Activated naive CD4-positive, alpha-beta T cell treated with anti-CD3 and anti-CD28 coated beads for 36 hours (primary cell): ENCODE measurements at regions of chr5 and their contacts with region 1.

Region 1: DNA sequence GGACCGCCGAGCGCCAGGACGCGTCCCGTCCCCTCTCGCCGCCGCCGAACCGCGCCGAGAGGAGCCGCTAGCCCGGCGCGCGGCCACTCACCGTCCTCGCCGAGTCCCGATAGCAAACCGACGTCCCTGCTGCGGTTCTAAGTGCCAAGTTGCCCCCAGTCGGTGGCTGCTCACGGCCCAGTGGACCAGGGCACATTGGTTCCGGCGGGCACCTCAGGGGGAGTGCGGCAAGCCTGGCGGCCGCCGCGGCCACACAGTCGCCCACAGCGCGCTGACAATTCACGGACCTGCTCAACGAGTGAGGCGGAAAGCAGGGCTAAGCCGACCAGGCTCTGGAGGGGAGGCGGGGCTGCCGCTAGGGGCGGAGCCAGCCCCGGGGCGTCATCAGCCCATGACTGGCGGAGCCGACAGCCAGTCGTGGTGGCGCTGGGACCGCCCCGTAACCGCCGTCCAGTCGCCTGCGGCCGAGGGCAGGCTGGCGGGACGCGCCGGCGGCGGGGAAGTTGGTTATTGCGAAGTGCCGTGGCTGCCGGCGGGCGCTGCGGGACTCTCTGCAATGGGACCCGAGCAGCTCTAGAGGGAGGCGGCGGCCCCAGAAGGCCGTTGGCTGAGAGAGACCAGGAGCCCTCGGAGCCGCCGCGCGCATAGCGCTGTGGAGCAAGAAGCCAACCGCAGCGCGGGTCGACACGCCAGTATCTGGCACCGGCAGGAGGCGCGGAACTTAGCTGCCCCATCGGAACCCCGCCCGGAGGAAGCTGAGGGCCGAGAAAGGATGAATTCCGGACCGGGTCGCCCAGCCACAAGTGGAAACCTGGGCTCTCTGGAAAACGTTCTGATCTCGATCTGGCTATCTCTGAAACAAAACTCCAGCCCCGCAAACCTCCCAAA is at the start of gene MARCHF3:
- DNase-seq: peak; percentile 94
- H3K4me3 Mint-ChIP-seq: peak within 1 kb of the TSS; percentile 93
- H3K27ac Mint-ChIP-seq: peak within 1 kb of the TSS; percentile 75
- H3K4me1 Mint-ChIP-seq: peaks cover 31% of the 10 kb centered on the region
- H3K27me3 Mint-ChIP-seq: no peaks in the 10 kb centered on the region
- total RNA-seq, gene MARCHF3: 11.8 TPM

Region 2: GRCh38 chr5:126600631-126601511 is 429.6 kb before region 1 on chr5 and contains the start of gene PHAX:
- CTCF ChIA-PET with region 1: no interaction called
- intact Hi-C with region 1: loop called (anchors 1 kb)
- DNase-seq: peak; percentile 78
- H3K4me3 Mint-ChIP-seq: peak within 1 kb of the TSS; percentile 90
- H3K27ac Mint-ChIP-seq: peak within 1 kb of the TSS; percentile 93
- H3K4me1 Mint-ChIP-seq: peaks cover 34% of the 10 kb centered on the region
- H3K27me3 Mint-ChIP-seq: no peaks in the 10 kb centered on the region
- total RNA-seq, gene PHAX: 34.9 to 37.2 TPM

Region 3: DNA sequence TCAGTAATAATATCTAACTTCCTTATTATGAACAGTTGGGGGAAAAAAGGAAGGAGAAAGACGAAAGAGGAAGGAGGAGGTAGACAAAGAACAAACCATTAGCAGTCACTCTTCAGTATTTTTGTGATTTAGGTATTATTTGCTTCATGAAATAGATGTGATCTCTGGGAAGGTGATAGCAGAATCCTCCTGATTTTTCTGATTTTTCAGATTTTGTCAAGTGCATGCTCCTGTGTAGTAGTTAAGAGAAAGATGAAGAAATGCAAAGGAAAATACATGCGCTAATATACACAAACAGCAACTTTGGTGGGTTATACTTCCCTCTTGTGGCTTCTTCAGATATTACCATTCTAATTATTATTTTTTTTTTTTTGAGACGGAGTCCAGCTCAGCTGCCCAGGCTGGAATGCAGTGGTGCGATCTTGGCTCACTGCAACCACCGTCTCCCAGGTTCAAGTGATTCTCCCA is 221.9 kb before region 1 on chr5:
- CTCF ChIA-PET with region 1: interaction called, 4 read pairs
- intact Hi-C with region 1: loop called (anchors 1 kb)
- DNase-seq: no peak
- H3K4me3 Mint-ChIP-seq: no peak overlapping the region
- H3K27ac Mint-ChIP-seq: peak overlapping the region; percentile 98
- H3K4me1 Mint-ChIP-seq: peaks cover 60% of the 10 kb centered on the region
- H3K27me3 Mint-ChIP-seq: no peaks in the 10 kb centered on the region

Region 4: GRCh38 chr5:126972062-126972895 is 58.2 kb before region 1 on chr5:
- CTCF ChIA-PET with region 1: interaction called, 3 read pairs
- intact Hi-C with region 1: loop called (anchors 1 kb)
- DNase-seq: peak; percentile 45
- H3K4me3 Mint-ChIP-seq: peak overlapping the region; percentile 70
- H3K27ac Mint-ChIP-seq: peak overlapping the region; percentile 94
- H3K4me1 Mint-ChIP-seq: peaks cover 37% of the 10 kb centered on the region
- H3K27me3 Mint-ChIP-seq: no peaks in the 10 kb centered on the region

Region 5: GRCh38 chr5:127019928-127020327 is 10.6 kb before region 1 on chr5:
- CTCF ChIA-PET with region 1: no interaction called
- intact Hi-C with region 1: loop called (anchors 1 kb)
- DNase-seq: no peak
- H3K4me3 Mint-ChIP-seq: no peak overlapping the region
- H3K27ac Mint-ChIP-seq: no peak overlapping the region
- H3K4me1 Mint-ChIP-seq: peaks cover 23% of the 10 kb centered on the region
- H3K27me3 Mint-ChIP-seq: no peaks in the 10 kb centered on the region

Region 6: DNA sequence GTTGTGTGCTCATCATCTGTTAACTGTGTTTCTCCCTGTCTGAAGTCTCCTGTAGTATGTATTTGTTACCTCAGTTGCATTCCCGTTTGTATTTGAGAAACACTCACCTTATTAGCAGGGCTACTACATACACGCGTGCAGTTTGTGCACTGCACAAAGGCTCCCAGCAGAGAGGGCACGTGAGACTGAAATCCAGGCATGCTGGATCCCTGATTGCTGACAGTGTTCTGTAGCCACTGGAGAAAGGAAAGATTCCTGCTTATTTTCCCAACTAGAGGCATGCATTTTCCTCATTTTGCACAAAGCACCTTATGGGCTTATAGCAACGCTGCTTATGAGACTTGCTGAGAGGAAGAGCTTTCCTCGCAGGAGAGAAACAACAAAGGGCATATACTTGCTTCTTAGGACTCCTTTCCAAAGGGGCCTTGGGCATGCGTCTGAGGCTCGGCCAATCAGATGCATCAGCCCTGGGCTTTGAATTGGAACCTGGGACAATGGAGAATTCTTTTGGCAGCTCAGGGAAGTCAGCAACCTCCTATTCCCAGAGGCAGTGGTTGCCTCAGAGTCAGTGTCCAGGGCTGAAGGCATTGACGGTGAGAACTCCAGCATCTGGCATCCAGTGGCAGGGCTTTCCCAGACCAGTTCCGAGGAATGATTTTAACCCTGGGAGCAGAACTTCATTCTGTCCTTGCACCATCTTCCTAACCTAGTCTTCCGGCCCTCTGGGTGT is 250.2 kb after region 1 on chr5:
- CTCF ChIA-PET with region 1: no interaction called
- intact Hi-C with region 1: no loop called
- DNase-seq: no peak
- H3K4me3 Mint-ChIP-seq: no peak overlapping the region
- H3K27ac Mint-ChIP-seq: no peak overlapping the region
- H3K4me1 Mint-ChIP-seq: no peaks in the 10 kb centered on the region
- H3K27me3 Mint-ChIP-seq: peaks cover 4% of the 10 kb centered on the region

Region 7: DNA sequence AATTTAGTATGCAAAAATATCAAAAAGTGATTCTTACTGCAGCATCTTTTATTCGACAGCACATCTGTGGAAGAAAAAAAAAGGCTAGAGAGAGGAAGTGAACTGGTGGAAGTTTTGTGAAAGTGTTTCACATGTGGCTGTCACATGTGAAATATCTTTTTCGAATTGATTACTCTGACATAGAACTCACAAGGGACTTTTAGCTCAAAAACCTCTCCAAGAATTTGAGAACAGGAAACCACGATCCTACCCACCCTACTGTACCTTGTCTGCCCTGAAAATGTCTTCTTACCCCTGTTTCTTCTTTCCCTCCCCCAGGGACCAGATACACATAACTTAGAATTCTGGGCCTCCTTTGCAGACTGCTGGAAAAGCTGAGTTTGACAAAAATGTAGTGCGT is 380.5 kb after region 1 on chr5:
- CTCF ChIA-PET with region 1: no interaction called
- intact Hi-C with region 1: no loop called
- DNase-seq: no peak
- H3K4me3 Mint-ChIP-seq: no peak overlapping the region
- H3K27ac Mint-ChIP-seq: no peak overlapping the region
- H3K4me1 Mint-ChIP-seq: no peaks in the 10 kb centered on the region
- H3K27me3 Mint-ChIP-seq: peaks cover 11% of the 10 kb centered on the region

Region 8: DNA sequence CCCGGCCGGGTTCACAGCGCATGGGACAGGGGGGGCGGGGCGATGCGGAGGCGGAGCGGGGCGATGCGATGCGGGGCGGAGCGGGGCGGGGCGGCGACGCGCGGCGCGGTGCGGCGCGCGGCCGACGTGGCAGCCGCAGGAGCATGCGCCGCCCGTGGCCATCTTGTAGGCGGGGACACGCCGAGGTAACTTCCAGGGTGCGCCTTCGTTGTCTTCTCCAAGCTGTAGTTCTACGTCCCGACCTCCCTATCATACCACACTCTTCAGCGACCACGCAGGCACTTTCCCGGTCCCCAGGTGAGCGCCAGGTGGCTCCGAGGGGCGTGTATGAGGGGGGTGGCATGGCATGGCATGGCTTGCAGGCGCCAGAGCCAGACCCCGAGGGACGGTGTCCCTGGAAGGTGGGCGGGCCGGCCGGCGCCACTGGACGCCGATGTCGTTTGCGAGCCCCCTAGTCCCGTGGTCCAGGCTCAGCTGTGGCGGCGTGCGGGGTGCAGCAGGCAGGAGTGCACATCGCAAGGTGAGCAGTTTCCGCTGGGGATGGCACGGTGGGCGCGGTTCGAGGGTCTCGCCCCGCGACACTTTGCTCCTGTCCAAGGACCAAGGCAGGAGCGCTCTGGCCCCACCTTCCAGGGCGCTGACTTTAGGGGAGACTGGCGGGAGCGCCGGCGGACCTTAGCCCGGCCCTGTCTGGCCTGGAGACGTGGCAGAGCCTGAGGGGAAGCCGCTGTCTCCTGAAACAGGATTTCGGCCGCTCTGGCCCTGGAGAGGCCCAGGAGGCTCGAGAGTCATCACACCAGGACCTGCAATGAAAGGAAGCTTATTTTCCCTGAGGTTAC is 487.2 kb after region 1 on chr5 and contains the start of gene PRRC1:
- CTCF ChIA-PET with region 1: no interaction called
- intact Hi-C with region 1: loop called (anchors 1 kb)
- DNase-seq: peak; percentile 83
- H3K4me3 Mint-ChIP-seq: peak within 1 kb of the TSS; percentile 81
- H3K27ac Mint-ChIP-seq: peak within 1 kb of the TSS; percentile 63
- H3K4me1 Mint-ChIP-seq: peaks cover 31% of the 10 kb centered on the region
- H3K27me3 Mint-ChIP-seq: no peaks in the 10 kb centered on the region
- total RNA-seq, gene PRRC1: 34.1 to 35.1 TPM